Activated CD8-positive, alpha-beta T cell treated with anti-CD3 and anti-CD28 coated beads, Interleukin-2, amount 10 ng/mL, durations not matched to agents 7 days and 5 days (primary cell): ENCODE measurements at regions of chr3 and their contacts with region 1.

Region 1: GRCh38 chr3:129052675-129053074 is 7.9 kb upstream of the GP9 start:
- DNase-seq: no peak
- ATAC-seq: no peak
- H3K4me3 Mint-ChIP-seq: no peak overlapping the region
- H3K27ac Mint-ChIP-seq: no peak overlapping the region
- H3K4me1 Mint-ChIP-seq: peaks cover 8% of the 10 kb centered on the region
- H3K27me3 Mint-ChIP-seq: peaks cover 12% of the 10 kb centered on the region

Region 2: DNA sequence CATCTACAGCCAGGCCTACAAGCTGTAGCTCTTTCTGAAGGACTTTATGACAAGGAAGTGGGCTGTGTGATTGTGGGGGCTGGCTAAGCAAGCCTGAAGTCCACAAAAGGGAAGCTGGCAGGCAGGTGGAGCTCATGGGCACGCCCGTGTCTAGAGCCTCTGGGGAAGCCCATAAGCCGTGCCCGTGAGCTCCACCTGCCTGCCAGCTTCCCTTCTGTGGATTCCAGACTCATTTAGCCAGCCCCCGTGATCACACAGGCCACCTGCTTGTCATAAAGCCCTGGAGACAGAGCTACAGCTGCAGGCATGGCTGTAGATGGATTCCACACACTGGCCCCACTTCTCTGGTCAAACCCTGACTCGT is 36.3 kb before region 1 on chr3:
- CTCF ChIA-PET with region 1: interaction called, 55 read pairs
- POLR2A ChIA-PET with region 1: interaction called, 6 read pairs
- DNase-seq: peak; percentile 81
- ATAC-seq: peak; percentile 88
- H3K4me3 Mint-ChIP-seq: peak overlapping the region; percentile 66
- H3K27ac Mint-ChIP-seq: peak overlapping the region; percentile 91
- H3K4me1 Mint-ChIP-seq: peaks cover 37% of the 10 kb centered on the region
- H3K27me3 Mint-ChIP-seq: no peaks in the 10 kb centered on the region

Region 3: DNA sequence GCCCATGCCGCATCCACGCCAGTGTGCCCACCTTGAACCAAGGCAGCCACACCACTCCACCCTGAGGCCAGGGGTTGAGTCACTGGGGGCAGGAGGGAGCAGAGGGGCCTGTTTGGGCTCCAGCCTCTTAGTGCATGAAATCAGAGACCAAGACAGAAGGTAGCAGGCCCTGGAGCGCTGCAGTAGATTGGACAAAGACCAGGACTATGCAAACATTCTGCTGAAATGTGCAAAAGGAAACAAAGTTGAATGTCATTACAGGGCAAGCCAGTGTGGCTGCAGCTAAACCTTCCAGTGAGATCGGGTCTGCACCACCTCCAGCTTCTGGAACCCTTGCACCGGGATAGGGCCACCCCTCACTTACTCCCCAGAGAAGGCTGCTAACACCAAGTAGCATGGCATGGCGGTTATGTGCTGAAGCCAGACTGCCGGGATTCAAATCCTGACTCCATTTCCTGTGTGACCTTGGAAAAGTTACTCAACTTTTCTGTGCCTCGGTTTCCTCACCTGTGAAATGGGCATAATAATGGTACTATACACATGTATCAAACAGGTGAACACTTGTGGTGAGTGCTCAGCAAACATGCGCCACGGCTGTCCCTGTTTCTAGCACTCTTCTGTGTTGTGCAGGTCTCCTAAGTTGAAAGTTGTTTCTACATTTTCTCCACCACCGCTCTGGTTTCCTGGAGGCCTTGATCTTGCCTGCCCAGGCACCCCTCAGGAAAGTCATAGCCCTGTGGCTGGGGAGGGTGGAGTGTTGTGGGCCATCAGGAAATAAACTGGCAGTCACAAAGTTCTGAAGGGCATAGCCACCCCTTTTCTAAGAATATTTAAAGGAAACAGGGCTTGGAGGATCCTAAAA is 17.1 kb before region 1 on chr3:
- CTCF ChIA-PET with region 1: interaction called, 22 read pairs
- POLR2A ChIA-PET with region 1: no interaction called
- DNase-seq: peak; percentile 33
- ATAC-seq: peak; percentile 59
- H3K4me3 Mint-ChIP-seq: no peak overlapping the region
- H3K27ac Mint-ChIP-seq: peak overlapping the region; percentile 70
- H3K4me1 Mint-ChIP-seq: peaks cover 25% of the 10 kb centered on the region
- H3K27me3 Mint-ChIP-seq: peaks cover 4% of the 10 kb centered on the region

Region 4: DNA sequence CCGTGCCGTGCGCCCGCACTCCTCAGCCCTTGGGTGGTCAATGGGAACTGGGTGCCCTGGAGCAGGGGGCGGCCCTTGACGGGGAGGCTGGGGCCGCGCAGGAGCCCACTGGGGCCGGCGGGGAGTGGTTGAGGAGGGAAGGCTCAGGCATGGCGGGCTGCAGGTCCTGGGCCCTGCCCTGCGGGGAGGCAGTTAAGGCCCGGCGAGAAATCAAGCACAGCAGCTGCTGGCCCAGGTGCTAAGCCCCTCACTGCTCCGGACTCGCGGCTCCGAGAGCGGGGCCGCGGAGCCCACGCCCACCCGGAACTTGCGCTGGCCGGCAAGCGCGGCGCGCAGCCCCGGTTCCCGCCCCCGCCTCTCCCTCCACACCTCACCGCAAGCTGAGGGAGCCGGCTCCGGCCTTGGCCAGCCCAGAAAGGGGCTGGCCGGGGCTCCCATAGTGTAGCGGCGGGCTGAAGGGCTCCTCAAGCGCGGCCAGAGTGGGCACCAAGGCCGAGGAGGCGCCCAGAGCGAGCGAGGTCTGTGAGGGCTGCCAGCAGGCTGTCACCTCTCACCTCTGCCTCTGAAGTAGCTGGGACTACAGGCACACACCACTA is 15.7 kb after region 1 on chr3:
- CTCF ChIA-PET with region 1: interaction called, 116 read pairs
- POLR2A ChIA-PET with region 1: interaction called, 9 read pairs
- DNase-seq: peak; percentile 30
- ATAC-seq: peak; percentile 77
- H3K4me3 Mint-ChIP-seq: peak overlapping the region; percentile 58
- H3K27ac Mint-ChIP-seq: peak overlapping the region; percentile 39
- H3K4me1 Mint-ChIP-seq: peaks cover 25% of the 10 kb centered on the region
- H3K27me3 Mint-ChIP-seq: peaks cover 2% of the 10 kb centered on the region

Region 5: DNA sequence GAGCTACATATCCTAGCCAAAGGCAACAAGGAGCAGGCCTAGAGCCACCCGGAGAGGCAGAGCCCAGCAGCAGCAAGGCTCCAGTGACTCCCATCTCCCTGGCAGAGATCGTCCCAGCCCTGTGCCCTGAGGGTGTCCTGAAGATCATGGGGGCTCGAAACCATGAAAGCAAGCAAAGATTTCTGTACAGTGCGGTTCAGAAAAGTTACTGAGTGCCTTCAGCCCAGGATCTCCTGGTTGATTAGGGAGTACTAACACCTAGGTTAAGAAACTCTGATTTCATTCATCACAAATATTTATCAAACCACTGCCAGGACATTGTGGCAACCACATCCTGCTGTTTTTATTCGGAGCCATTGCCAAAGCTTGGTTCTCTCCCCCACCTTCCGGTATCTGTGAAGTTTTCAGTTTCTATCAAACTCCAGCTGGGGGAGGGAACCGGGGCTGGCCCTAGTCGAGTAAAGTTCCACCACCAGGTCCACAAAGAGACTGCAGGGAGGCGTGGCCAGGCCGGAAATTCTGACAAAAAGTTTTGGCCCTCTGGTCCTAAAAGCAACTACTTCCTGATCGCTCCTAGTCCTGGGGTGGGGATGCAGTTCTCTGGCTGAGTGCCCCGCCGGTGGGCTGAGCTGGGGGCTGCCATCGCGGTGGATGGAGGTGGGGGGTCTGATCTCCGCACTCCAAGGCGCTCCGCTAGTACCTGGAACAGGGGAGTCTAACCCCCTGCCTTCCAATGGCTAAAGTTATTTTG is 67.8 kb after region 1 on chr3:
- CTCF ChIA-PET with region 1: interaction called, 102 read pairs
- POLR2A ChIA-PET with region 1: interaction called, 39 read pairs
- DNase-seq: peak; percentile 98
- ATAC-seq: peak; percentile 69
- H3K4me3 Mint-ChIP-seq: peak overlapping the region; percentile 84
- H3K27ac Mint-ChIP-seq: peak overlapping the region; percentile 91
- H3K4me1 Mint-ChIP-seq: peaks cover 56% of the 10 kb centered on the region
- H3K27me3 Mint-ChIP-seq: no peaks in the 10 kb centered on the region

Region 6: DNA sequence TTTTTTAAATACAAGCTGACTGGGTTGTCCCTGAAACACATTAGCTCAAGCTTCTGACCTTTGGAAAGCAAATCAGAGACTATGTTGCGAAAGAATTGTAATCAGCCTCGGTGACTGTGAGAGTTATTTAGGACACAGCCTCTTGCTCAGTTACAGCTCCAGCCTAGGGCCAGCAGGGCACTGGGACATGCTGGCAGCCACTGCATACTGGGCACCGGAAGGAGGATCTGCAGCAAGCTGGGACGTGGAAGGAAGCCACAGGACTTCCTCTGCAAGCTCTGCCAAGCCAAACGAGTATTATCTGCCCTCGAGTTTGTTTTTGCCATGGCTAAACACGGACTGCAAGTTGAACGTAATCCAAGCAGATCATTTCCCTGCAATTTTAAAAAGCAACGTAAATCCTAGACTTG is 172.3 kb after region 1 on chr3:
- CTCF ChIA-PET with region 1: interaction called, 16 read pairs
- POLR2A ChIA-PET with region 1: no interaction called
- DNase-seq: peak; percentile 48
- ATAC-seq: peak; percentile 77
- H3K4me3 Mint-ChIP-seq: peak overlapping the region; percentile 57
- H3K27ac Mint-ChIP-seq: peak overlapping the region; percentile 86
- H3K4me1 Mint-ChIP-seq: peaks cover 47% of the 10 kb centered on the region
- H3K27me3 Mint-ChIP-seq: no peaks in the 10 kb centered on the region

Region 7: GRCh38 chr3:129845956-129846355 is 793.3 kb after region 1 on chr3:
- CTCF ChIA-PET with region 1: no interaction called
- POLR2A ChIA-PET with region 1: no interaction called
- DNase-seq: no peak
- ATAC-seq: no peak
- H3K4me3 Mint-ChIP-seq: no peak overlapping the region
- H3K27ac Mint-ChIP-seq: no peak overlapping the region
- H3K4me1 Mint-ChIP-seq: no peaks in the 10 kb centered on the region
- H3K27me3 Mint-ChIP-seq: no peaks in the 10 kb centered on the region